ENCODE measurements at regions of chr12 and their contacts with region 1.

Region 1: DNA sequence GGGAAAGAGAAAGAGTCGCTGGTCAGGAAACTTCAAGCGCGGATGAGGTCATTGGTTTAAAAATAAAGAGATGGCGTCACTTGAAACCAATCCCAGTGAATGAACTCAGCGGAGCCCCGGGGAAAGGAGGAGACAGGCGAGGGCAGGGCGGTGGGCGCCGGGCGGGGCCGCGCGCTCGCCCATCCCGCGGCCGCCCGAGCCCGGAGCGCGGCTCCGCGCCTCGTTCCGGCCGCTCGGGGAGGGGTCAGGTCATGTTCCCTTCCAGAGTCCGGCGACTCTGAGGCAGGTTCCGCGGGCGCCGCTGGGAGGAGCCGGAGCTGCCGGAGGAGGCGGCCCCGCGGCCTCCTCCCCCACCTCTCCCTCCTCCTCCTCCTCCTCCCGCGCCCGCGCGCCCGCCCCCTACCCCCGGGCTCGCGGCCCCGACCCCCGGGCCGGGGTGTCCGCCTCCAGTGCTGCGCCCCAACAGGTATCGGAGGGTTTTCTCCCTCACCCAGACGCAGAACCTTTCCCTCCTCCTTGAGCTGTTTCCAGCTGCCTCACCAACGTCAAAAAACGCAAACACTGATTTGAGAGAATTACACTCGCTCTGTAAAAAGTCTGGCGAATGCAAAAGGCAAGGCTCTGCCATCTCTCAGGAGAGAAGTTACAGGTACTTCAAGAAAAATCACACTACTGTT is at the start of gene DUSP16:
- DNase-seq: peak; percentile 65
- ATAC-seq: peak; percentile 68
- H3K4me3 Mint-ChIP-seq: peak within 1 kb of the TSS; percentile 84
- H3K27ac Mint-ChIP-seq: peak within 1 kb of the TSS; percentile 79
- H3K4me1 Mint-ChIP-seq: peaks cover 15% of the 10 kb centered on the region
- H3K27me3 Mint-ChIP-seq: peaks cover 3% of the 10 kb centered on the region
- CTCF ChIP-seq: no peak
- total RNA-seq, gene DUSP16: 1.1 and 2.0 TPM in 2 replicates

Region 2: GRCh38 chr12:12486661-12487240 is 76.0 kb before region 1 on chr12:
- CTCF ChIA-PET with region 1: no interaction called
- POLR2A ChIA-PET with region 1: no interaction called
- intact Hi-C with region 1: loop called (anchors 5 kb)
- DNase-seq: no peak
- ATAC-seq: peak; percentile 60
- H3K4me3 Mint-ChIP-seq: no peak overlapping the region
- H3K27ac Mint-ChIP-seq: no peak overlapping the region
- H3K4me1 Mint-ChIP-seq: peaks cover 21% of the 10 kb centered on the region
- H3K27me3 Mint-ChIP-seq: no peaks in the 10 kb centered on the region
- CTCF ChIP-seq: no peak

Region 3: GRCh38 chr12:12543959-12544358 is 18.8 kb before region 1 on chr12:
- CTCF ChIA-PET with region 1: interaction called, 4 read pairs
- POLR2A ChIA-PET with region 1: interaction called, 4 read pairs
- intact Hi-C with region 1: loop called (anchors 2 kb)
- DNase-seq: no peak
- ATAC-seq: no peak
- H3K4me3 Mint-ChIP-seq: no peak overlapping the region
- H3K27ac Mint-ChIP-seq: no peak overlapping the region
- H3K4me1 Mint-ChIP-seq: peaks cover 6% of the 10 kb centered on the region
- H3K27me3 Mint-ChIP-seq: no peaks in the 10 kb centered on the region
- CTCF ChIP-seq: no peak

Region 4: DNA sequence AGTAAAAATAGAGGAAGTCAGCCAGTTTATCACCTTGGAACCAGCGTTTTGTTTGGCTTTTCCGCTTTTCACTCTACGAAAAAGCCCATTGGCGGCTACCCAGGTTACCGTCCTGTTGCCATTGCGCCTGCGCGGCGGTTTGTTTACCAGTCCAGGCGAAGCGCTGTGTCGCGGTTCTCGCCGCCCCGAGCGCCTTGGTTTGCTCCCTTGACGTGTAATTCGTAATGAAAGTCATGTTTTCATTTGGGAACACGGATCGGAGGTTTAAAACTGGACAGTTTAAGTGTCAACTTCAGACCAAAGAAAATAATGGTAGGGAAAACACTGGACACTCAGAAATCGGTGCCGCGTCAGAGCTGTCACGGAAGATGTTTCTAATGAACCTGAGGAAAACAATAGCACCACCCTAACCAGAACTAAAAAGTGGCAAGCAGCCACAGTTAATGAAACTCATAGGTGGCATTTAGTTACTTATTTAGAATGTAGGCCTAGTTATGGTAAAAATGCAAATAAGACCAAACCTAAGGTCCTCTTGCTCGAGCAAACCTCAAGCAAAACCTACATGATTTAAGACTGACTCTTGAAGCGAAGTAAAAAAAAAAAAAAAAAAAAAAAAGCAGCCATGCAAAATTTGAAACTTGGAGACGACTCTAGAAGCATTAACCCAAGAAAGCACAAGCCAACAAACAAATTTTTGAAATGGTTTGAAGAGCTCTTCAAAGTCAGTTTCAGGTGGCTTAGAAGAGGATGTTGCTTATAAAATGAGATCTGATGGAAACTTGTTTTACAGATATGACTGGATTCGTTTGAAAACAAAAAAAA is 134.1 kb after region 1 on chr12:
- CTCF ChIA-PET with region 1: no interaction called
- POLR2A ChIA-PET with region 1: no interaction called
- intact Hi-C with region 1: loop called (anchors 2 kb)
- DNase-seq: peak; percentile 78
- ATAC-seq: peak; percentile 80
- H3K4me3 Mint-ChIP-seq: peak overlapping the region; percentile 96
- H3K27ac Mint-ChIP-seq: peak overlapping the region; percentile 99
- H3K4me1 Mint-ChIP-seq: peaks cover 33% of the 10 kb centered on the region
- H3K27me3 Mint-ChIP-seq: no peaks in the 10 kb centered on the region
- CTCF ChIP-seq: no peak

Region 5: DNA sequence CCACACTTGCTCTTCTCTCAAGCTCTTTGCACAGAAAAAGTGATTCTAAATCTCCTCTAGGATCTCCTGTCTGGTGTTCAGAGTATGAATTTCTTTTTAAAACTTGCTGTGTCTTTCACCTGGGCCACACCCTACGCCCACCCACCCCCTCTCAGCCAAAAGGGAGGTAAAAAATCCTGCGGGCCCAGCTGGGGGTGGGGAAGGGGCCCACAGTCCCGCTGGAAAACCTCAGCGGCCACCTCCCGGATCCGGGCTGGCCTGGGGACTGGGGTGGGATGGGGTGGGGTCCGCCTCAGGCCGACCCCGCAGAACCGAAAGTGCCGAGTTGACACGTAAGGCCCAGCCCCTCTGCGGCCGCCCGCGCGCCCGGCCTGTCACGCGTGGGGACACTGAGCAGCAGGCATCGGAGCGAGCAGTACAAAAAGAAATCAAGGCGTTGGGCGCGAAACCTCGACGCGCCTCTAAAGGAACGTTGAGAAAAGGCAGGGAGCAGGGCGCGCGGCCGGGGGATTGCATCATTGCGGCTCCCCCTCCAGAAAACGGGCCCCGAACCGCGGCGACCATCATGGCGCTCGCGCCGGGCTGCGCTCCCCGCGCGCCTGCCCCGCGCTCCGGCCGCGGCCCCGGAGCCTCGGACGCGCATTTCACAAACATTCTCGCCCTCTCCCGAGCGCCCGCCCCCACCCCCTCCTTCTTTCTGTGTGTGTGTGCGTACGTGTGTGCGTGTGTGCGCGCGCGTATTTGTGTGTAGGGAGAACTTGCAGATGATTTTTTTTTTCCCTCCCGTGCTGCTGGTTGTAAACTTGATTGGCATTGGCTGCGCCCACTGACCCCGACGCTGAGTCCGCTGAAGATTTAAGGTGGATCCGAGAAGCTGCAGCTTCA is 162.2 kb after region 1 on chr12:
- CTCF ChIA-PET with region 1: no interaction called
- POLR2A ChIA-PET with region 1: interaction called, 8 read pairs
- intact Hi-C with region 1: loop called (anchors 2 kb)
- DNase-seq: peak; percentile 81
- ATAC-seq: peak; percentile 69
- H3K4me3 Mint-ChIP-seq: peak overlapping the region; percentile 97
- H3K27ac Mint-ChIP-seq: peak overlapping the region; percentile 97
- H3K4me1 Mint-ChIP-seq: peaks cover 50% of the 10 kb centered on the region
- H3K27me3 Mint-ChIP-seq: no peaks in the 10 kb centered on the region
- CTCF ChIP-seq: no peak

Region 6: GRCh38 chr12:12736759-12737676 is 174.3 kb after region 1 on chr12:
- CTCF ChIA-PET with region 1: interaction called, 10 read pairs
- POLR2A ChIA-PET with region 1: interaction called, 3 read pairs
- intact Hi-C with region 1: loop called (anchors 1 kb)
- DNase-seq: peak; percentile 19
- ATAC-seq: peak; percentile 91
- H3K4me3 Mint-ChIP-seq: peak overlapping the region; percentile 30
- H3K27ac Mint-ChIP-seq: peak overlapping the region; percentile 72
- H3K4me1 Mint-ChIP-seq: peaks cover 13% of the 10 kb centered on the region
- H3K27me3 Mint-ChIP-seq: no peaks in the 10 kb centered on the region
- CTCF ChIP-seq: peak; percentile 19

Region 7: GRCh38 chr12:12803186-12803585 is 240.5 kb after region 1 on chr12:
- CTCF ChIA-PET with region 1: no interaction called
- POLR2A ChIA-PET with region 1: no interaction called
- intact Hi-C with region 1: loop called (anchors 2 kb)
- DNase-seq: no peak
- ATAC-seq: peak; percentile 70
- H3K4me3 Mint-ChIP-seq: peak overlapping the region; percentile 12
- H3K27ac Mint-ChIP-seq: peak overlapping the region; percentile 6
- H3K4me1 Mint-ChIP-seq: peaks cover 65% of the 10 kb centered on the region
- H3K27me3 Mint-ChIP-seq: no peaks in the 10 kb centered on the region
- CTCF ChIP-seq: no peak

Measured in activated B cell treated with CpG ODN at 0.5 μM for 24 hours (primary cell).